Esophagus muscularis mucosa (tissue), 4 donors: ENCODE measurements at regions of chr19 and their contacts with region 1.

Region 1: GRCh38 chr19:3075895-3076431 is 13.7 kb upstream of the TLE5 start:
- DNase-seq: no peak
- H3K4me3 ChIP-seq: peak overlapping the region in 2 of 4 donors; percentile 16 to 21
- H3K27ac ChIP-seq: peak overlapping the region in 1 of 4 donors; percentile 29
- H3K4me1 ChIP-seq: peaks cover 14 to 39% (median 24%) of the 10 kb centered on the region in 4 donors
- H3K27me3 ChIP-seq: no peaks in the 10 kb centered on the region
- CTCF ChIP-seq: peak; percentile 97 to 99 (median 98)
- EP300 ChIP-seq: no peak
- POLR2A ChIP-seq: no peak

Region 2: DNA sequence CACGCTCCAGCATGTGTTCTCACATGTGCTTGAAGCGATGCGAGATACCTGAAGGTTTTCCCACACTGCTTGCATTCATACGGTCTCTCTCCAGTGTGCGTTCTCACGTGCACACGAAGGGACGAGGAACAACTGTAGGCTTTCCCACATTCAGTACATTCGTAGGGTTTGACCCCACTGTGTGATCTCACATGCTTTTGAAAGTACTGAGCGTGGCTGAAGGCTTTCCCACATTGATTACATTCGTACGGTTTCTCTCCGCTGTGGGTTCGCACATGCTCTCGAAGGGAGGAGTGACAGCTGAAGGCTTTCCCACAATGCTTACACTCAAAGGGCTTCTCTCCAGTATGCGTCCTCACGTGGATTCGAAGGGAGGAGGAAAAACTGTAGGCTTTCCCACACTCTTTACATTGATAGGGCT is 142.5 kb before region 1 on chr19:
- intact Hi-C with region 1: no loop called
- DNase-seq: no peak
- H3K4me3 ChIP-seq: no peak overlapping the region
- H3K27ac ChIP-seq: no peak overlapping the region
- H3K4me1 ChIP-seq: no peaks in the 10 kb centered on the region
- H3K27me3 ChIP-seq: no peaks in the 10 kb centered on the region
- CTCF ChIP-seq: no peak
- EP300 ChIP-seq: no peak
- POLR2A ChIP-seq: no peak

Region 3: GRCh38 chr19:3035542-3036118 is 40.3 kb before region 1 on chr19:
- intact Hi-C with region 1: no loop called
- DNase-seq: peak; percentile 100
- H3K4me3 ChIP-seq: peak overlapping the region; percentile 57 to 66 (median 62)
- H3K27ac ChIP-seq: peak overlapping the region; percentile 84 to 94 (median 93)
- H3K4me1 ChIP-seq: peaks cover 18 to 36% (median 24%) of the 10 kb centered on the region in 4 donors
- H3K27me3 ChIP-seq: no peaks in the 10 kb centered on the region
- CTCF ChIP-seq: no peak
- EP300 ChIP-seq: no peak
- POLR2A ChIP-seq: no peak

Region 4: DNA sequence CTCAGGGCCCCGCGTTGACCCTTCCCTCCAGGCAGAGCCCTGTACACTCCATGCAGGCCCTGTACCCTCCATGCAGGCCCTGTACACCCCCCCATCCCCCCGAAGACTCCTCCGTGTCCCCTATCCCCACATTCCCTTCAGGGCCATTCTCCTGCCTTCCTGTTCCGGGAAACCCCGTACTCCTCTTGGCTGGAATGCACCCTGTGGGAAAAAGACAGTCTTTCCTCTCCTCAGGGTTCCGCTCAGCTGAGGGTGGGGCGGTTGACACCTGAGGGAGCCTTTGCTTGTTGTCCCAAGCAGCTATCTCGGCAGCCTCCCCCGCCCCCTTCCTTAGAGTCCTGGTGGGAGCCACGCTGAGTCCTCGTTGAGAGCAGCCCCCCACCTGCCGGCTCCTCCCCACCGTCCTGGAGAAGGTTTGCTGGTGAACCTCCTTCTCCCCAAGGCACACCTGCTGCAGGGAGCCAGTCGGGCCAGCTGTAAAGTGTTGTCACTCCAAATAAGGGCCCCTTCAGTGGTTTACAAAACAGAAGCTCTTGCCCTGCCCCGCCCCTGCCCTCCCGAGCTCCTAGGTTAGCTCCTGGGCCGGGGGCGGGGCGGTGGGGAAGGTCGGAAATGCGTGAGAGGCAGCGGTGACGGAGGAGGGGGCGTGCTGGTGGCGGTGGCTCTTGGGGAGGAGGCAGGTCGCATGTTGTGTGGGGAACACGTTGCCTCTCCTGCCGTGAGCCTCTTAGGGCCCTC is 19.6 kb after region 1 on chr19:
- intact Hi-C with region 1: no loop called
- DNase-seq: no peak
- H3K4me3 ChIP-seq: peak overlapping the region; percentile 81 to 99 (median 98)
- H3K27ac ChIP-seq: peak overlapping the region; percentile 82 to 88 (median 83)
- H3K4me1 ChIP-seq: peaks cover 54 to 65% (median 64%) of the 10 kb centered on the region in 4 donors
- H3K27me3 ChIP-seq: no peaks in the 10 kb centered on the region
- CTCF ChIP-seq: no peak
- EP300 ChIP-seq: no peak
- POLR2A ChIP-seq: no peak

Region 5: GRCh38 chr19:3125900-3126524 is 50.0 kb after region 1 on chr19:
- intact Hi-C with region 1: loop called (anchors 5 kb)
- DNase-seq: no peak
- H3K4me3 ChIP-seq: no peak overlapping the region
- H3K27ac ChIP-seq: no peak overlapping the region
- H3K4me1 ChIP-seq: peaks cover 0 to 7% (median 0%) of the 10 kb centered on the region in 4 donors
- H3K27me3 ChIP-seq: no peaks in the 10 kb centered on the region
- CTCF ChIP-seq: peak; percentile 65 to 84 (median 67)
- EP300 ChIP-seq: no peak
- POLR2A ChIP-seq: no peak